ENCODE measurements at regions of chr4 and their contacts with region 1.

Region 1: DNA sequence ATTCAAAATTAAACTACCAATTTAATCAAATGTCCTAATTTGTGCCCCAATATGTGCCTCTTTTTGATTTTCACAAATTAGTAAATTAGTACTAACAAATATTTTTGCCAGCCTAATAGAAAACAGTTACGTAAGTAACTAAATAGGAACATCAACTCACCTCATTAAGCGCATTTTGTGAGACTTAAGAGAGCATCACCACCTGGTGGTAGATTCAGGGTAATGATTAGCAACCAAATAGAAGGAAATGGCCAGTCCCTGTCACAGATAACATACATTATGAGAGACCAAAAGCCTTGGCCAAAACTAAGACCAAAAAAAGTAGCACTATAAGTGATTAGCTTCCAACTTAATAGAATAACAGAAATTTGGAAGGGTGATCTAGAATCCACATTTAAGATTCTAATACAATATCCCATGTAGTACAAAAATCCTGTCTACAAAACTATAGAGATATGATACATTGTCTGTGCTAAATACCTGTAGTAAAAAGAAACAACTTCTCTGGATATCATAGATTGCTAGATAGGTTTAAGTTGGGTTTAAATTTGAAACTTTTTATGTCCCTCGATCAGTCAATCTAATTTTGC is 46.7 kb downstream of the C4orf46 start:
- DNase-seq: peak; percentile 58
- ATAC-seq: peak; percentile 89
- H3K4me3 ChIP-seq: no peak overlapping the region
- H3K27ac ChIP-seq: no peak overlapping the region
- H3K4me1 ChIP-seq: no peaks in the 10 kb centered on the region
- H3K27me3 ChIP-seq: no peaks in the 10 kb centered on the region
- CTCF ChIP-seq: peak; percentile 72 to 84 (median 77)
- POLR2A ChIP-seq: no peak
- RAD21 ChIP-seq: peak; percentile 86

Region 2: DNA sequence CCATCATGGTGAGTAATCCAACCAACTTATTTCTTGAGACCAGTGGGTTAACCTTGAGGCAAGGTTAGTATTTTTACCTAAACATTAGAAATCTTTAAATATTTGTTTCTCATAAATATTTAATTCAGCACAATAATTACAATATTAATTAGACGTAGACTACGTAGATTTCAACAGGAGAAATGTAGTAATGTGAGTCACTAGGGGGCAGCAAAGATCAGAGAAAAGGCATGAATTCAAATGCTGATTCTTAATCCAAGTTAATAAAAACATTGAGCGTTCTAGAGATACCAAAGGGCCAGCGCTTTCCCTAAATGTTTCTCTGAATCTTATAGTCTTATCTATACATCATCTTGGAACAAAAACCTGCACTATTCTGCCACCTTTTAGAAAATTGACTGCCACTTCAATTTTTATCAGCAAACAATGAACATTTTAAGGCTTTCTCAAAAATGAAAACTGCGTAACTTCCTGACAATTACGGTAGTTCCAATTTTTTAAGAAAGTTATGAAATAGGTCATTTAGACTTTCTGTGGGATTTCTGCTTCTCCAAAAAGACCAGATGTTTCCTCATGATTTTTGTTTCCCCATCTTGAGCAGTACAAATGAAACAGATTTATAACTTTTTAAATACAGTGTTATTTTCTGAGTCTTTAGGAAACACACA is 632.8 kb before region 1 on chr4:
- CTCF ChIA-PET with region 1: no interaction called
- POLR2A ChIA-PET with region 1: no interaction called
- RAD21 ChIA-PET with region 1: no interaction called
- intact Hi-C with region 1: loop called (anchors 5 kb)
- DNase-seq: peak; percentile 73
- ATAC-seq: peak; percentile 73
- H3K4me3 ChIP-seq: peak overlapping the region; percentile 13 to 35; a peak in 3 of 4 replicates
- H3K27ac ChIP-seq: no peak overlapping the region
- H3K4me1 ChIP-seq: peaks cover 0 to 4% of the 10 kb centered on the region in 2 experiments; a peak in 2 of 4 replicates
- H3K27me3 ChIP-seq: no peaks in the 10 kb centered on the region
- CTCF ChIP-seq: peak; percentile 54 to 85 (median 65)
- POLR2A ChIP-seq: no peak
- RAD21 ChIP-seq: peak; percentile 94

Region 3: GRCh38 chr4:158193171-158193749 is 431.7 kb before region 1 on chr4:
- CTCF ChIA-PET with region 1: no interaction called
- POLR2A ChIA-PET with region 1: no interaction called
- RAD21 ChIA-PET with region 1: no interaction called
- intact Hi-C with region 1: loop called (anchors 10 kb)
- DNase-seq: peak; percentile 40
- ATAC-seq: peak; percentile 83
- H3K4me3 ChIP-seq: no peak overlapping the region
- H3K27ac ChIP-seq: no peak overlapping the region
- H3K4me1 ChIP-seq: no peaks in the 10 kb centered on the region
- H3K27me3 ChIP-seq: no peaks in the 10 kb centered on the region
- CTCF ChIP-seq: peak; percentile 53 to 70 (median 62); a peak in 5 of 6 replicates
- POLR2A ChIP-seq: no peak
- RAD21 ChIP-seq: peak; percentile 70

Region 4: DNA sequence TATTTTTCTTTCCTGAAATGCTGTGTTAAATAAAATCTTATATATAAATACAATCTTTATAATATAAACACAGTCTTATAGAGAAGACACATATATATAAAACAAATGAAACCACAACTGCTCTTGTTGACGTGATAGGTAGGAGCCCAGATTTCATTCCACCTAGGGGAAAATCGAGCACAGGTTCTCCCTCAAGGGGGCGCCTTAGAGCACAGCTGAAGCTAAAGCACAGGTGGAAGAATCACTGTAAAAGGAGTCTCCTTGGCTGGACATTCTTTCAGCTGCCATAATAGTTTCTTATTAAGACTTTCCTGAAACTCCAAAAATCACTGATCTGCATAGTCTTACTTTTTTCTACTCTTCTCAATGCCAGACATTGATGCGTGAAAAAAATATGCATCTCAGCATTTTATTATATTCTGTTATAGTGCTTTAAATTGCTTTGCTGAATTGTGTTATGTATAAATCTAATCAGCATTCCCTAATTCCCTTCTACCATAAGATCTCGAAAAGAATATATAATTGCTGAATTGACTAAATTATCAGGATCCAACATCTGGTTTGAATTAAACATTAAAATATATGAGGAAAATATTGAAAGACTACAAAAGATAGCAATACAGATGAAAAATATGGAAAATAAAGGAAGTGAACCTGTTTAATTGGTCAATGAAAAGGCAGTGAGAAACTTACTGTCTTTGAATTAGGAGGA is 128.8 kb before region 1 on chr4:
- CTCF ChIA-PET with region 1: no interaction called
- POLR2A ChIA-PET with region 1: no interaction called
- RAD21 ChIA-PET with region 1: no interaction called
- intact Hi-C with region 1: loop called (anchors 5 kb)
- DNase-seq: peak; percentile 21
- ATAC-seq: peak; percentile 71; the same call in 1 of the 2 replicates
- H3K4me3 ChIP-seq: no peak overlapping the region
- H3K27ac ChIP-seq: no peak overlapping the region
- H3K4me1 ChIP-seq: no peaks in the 10 kb centered on the region
- H3K27me3 ChIP-seq: no peaks in the 10 kb centered on the region
- CTCF ChIP-seq: peak; percentile 49 to 80 (median 70)
- POLR2A ChIP-seq: no peak
- RAD21 ChIP-seq: peak; percentile 56

Measured in HCT116 (cell line).